Activated CD8-positive, alpha-beta T cell treated with anti-CD3 and anti-CD28 coated beads for 36 hours (primary cell): ENCODE measurements at regions of chr9 and their contacts with region 1.

Region 1: DNA sequence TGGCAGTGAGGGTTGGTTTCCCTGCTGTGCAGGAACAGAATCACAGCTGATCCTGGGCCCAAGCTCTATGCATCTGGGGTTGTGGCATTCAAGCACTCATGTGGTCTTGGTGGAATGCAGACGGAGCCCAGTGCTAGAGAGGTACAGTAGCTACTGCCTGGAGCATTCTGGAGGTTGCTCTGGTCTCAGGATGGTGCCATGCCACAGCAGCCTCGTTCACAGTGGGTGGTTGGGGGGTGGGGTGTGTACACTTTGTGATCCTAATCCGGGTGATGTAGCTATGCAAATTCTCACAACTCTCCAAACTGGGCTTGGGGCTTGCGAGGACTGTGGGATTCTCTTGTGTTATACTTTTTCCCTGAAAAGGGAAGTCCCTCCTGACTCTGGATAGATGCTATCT is 45.2 kb downstream of the FGD3 start:
- DNase-seq: no peak
- ATAC-seq: no peak
- H3K4me3 Mint-ChIP-seq: no peak overlapping the region
- H3K27ac Mint-ChIP-seq: peak overlapping the region; percentile 79
- H3K4me1 Mint-ChIP-seq: peaks cover 90% of the 10 kb centered on the region
- H3K27me3 Mint-ChIP-seq: no peaks in the 10 kb centered on the region
- CTCF ChIP-seq: no peak

Region 2: GRCh38 chr9:92837191-92837590 is 155.4 kb before region 1 on chr9:
- CTCF ChIA-PET with region 1: no interaction called
- POLR2A ChIA-PET with region 1: no interaction called
- intact Hi-C with region 1: no loop called
- DNase-seq: no peak
- ATAC-seq: no peak
- H3K4me3 Mint-ChIP-seq: no peak overlapping the region
- H3K27ac Mint-ChIP-seq: no peak overlapping the region
- H3K4me1 Mint-ChIP-seq: no peaks in the 10 kb centered on the region
- H3K27me3 Mint-ChIP-seq: no peaks in the 10 kb centered on the region
- CTCF ChIP-seq: no peak

Region 3: GRCh38 chr9:92954049-92954861 is 38.3 kb before region 1 on chr9:
- CTCF ChIA-PET with region 1: interaction called, 11 read pairs
- POLR2A ChIA-PET with region 1: no interaction called
- intact Hi-C with region 1: no loop called
- DNase-seq: peak; percentile 93
- ATAC-seq: peak; percentile 90
- H3K4me3 Mint-ChIP-seq: peak overlapping the region; percentile 63
- H3K27ac Mint-ChIP-seq: peak overlapping the region; percentile 97
- H3K4me1 Mint-ChIP-seq: peaks cover 61% of the 10 kb centered on the region
- H3K27me3 Mint-ChIP-seq: no peaks in the 10 kb centered on the region
- CTCF ChIP-seq: no peak